Activated CD4-positive, alpha-beta T cell treated with anti-CD3 and anti-CD28 coated beads, Interleukin-2, amount 10 ng/mL, durations not matched to agents 7 days and 5 days (primary cell): ENCODE measurements at regions of chr17 and their contacts with region 1.

Region 1: DNA sequence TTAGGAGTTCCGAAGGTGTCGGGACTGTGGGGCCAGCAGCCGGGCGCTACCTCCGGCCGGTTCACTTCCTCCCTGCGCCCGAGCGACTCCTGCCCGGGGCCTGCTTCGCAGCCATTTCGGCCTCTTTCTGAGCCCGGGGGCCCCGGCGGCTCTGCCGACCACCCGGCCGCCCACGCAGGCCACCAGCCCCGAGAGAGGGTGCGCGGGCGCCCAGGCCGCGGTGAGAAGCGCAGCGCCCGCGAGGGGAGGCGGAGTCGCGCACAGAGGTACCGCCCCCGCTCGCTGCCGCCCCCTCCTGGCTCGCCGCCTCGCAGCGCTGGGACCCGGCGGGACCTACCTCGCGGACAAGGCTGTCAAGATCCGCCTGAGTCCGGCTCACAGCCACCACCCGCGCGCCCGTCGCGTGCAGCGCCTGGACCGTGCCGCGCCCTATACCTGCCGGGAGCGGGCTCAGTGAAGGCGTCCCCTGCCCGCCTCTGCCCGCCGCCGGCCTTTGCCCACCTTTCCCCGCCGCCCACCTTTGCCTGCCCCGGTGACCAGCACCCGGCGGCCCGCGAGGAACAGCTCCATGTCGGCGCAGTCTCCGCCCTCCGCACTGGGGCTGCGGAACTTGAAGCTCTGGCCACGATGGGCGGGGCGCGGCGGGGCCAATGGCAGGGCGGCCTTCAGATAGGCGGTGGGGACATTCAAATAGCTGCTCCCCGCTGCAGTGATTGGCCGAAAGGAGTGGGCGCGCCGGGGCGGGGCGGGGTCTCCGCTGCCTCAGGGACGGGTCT is at the start of gene DCXR:
- DNase-seq: peak; percentile 98
- H3K4me3 Mint-ChIP-seq: peak within 1 kb of the TSS; percentile 85
- H3K27ac Mint-ChIP-seq: peak within 1 kb of the TSS; percentile 97
- H3K4me1 Mint-ChIP-seq: peaks cover 28% of the 10 kb centered on the region
- H3K27me3 Mint-ChIP-seq: no peaks in the 10 kb centered on the region
- total RNA-seq, gene DCXR: 140 to 144 TPM

Region 2: DNA sequence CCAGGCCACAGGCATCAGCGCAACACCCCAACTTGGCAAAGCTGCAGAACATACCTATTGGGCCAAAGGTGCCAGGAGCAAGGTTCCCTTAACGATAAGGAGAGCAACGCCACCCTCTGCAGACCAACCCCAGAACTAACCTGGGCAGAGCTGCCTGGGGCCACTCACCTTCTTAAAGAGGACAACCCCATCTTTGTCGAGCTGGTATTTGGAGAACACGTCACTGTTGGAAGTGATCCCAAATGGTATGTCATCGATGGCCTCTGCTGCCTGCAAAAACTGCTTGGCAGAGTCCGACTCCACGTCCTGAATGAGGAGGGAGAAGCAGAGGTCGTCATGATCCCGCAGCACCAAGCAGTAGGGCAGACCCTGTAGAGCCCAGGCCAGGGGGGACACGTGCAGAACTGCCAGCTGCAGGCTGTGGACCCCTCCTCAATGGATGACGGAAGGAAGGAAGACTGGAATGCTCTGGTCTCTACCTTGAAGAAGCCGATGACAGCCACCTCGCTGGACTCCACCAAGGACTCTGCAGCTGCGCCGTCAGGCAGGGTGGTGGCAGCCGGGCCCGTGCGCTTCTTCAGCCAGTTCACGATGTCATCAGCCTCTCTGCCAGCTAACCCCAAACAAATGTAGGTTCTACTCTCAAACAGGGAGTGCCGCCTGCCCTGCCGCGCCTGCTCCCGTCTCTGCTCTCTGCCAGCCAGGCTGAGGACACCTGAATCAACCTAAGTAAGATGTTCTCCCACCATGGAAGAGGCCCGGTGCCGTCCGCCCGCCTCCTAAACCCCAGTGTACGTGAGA is 182.1 kb before region 1 on chr17:
- CTCF ChIA-PET with region 1: no interaction called
- POLR2A ChIA-PET with region 1: no interaction called
- DNase-seq: no peak
- H3K4me3 Mint-ChIP-seq: no peak overlapping the region
- H3K27ac Mint-ChIP-seq: no peak overlapping the region
- H3K4me1 Mint-ChIP-seq: peaks cover 25% of the 10 kb centered on the region
- H3K27me3 Mint-ChIP-seq: no peaks in the 10 kb centered on the region

Region 3: DNA sequence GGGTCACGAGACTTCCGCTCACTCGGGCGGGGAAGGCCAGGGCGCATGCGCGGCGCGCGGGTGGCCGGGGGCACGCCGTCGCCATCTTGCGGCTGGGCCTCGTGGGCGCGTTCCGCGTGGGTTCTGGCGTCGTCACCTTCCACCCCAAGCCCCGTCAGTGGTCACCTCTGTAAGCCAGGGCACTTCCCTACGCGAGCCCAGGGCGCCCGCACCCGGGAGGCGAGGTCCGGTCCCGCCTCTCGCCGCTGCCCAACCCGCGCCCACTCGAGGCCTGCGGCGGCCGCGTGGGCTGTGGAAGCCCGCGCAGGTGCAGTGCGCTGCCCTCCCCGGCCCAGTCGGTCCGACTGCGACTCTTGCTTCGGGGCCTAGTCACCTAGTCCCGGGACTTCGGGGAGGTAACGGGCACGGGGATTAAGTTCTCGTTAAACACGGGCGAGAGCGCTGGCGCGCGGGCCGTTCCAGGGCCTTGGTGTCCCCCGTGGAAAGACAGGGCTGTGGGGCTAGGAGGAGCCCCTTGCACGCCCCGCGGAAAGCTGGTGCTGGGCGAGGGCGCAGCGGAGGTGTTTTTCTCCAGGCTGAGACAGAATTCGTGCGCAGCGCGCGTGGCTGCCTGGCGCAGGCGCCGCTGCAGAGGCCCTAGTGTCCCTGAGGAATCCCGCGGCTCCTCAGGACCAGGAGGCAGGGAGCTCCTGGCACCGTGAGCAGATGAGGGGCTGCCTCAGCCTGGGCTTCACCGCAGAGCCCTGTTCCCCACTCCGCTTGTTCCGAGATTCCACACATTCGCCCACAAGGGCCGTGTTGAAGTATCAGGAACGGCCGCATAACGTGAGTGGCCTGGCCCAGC is 165.7 kb before region 1 on chr17:
- CTCF ChIA-PET with region 1: no interaction called
- POLR2A ChIA-PET with region 1: no interaction called
- DNase-seq: peak; percentile 95
- H3K4me3 Mint-ChIP-seq: peak overlapping the region; percentile 86
- H3K27ac Mint-ChIP-seq: peak overlapping the region; percentile 97
- H3K4me1 Mint-ChIP-seq: peaks cover 43% of the 10 kb centered on the region
- H3K27me3 Mint-ChIP-seq: no peaks in the 10 kb centered on the region

Region 4: DNA sequence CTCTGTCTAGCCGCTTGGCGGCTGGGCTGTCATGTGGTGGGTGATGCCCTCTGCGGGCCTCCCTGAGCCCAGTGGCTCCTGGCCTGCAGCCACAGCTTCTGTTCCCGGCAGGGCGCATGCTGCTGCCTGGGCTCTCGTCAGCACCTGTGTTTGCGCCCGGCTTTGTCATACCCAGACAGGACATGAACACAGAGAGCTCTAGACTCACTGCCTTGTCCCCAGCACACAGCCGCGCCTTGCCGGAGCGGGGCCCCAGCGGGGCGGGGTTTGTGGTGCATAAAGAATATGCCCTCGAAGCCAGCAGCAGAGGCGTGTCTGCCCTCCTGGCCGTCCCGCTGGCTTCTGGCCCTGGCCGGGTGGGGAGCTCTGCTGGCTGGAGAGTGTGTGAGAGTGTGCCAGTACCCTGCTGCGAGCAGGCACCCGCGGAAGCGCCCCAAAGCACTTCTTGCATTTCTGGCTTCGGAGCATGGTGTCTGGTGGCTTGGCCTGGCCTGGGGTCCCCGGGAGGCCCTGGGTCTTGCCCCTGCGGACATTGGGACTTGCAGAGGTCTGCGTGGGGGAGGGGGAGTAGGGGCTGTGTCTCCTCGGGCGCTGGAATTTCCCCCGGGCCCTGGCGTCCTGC is 45.5 kb before region 1 on chr17:
- CTCF ChIA-PET with region 1: no interaction called
- POLR2A ChIA-PET with region 1: no interaction called
- DNase-seq: no peak
- H3K4me3 Mint-ChIP-seq: no peak overlapping the region
- H3K27ac Mint-ChIP-seq: no peak overlapping the region
- H3K4me1 Mint-ChIP-seq: peaks cover 4% of the 10 kb centered on the region
- H3K27me3 Mint-ChIP-seq: no peaks in the 10 kb centered on the region

Region 5: GRCh38 chr17:82022981-82023374 is 14.3 kb before region 1 on chr17 and contains the start of gene LRRC45:
- CTCF ChIA-PET with region 1: interaction called, 49 read pairs
- POLR2A ChIA-PET with region 1: interaction called, 4 read pairs
- DNase-seq: peak; percentile 100
- H3K4me3 Mint-ChIP-seq: peak within 1 kb of the TSS; percentile 84
- H3K27ac Mint-ChIP-seq: peak within 1 kb of the TSS; percentile 82
- H3K4me1 Mint-ChIP-seq: peaks cover 47% of the 10 kb centered on the region
- H3K27me3 Mint-ChIP-seq: no peaks in the 10 kb centered on the region
- total RNA-seq, gene LRRC45: 54.5 to 68.4 TPM

Region 6: GRCh38 chr17:82050761-82051641 is 13.7 kb after region 1 on chr17:
- CTCF ChIA-PET with region 1: interaction called, 14 read pairs
- POLR2A ChIA-PET with region 1: interaction called, 3 read pairs
- DNase-seq: no peak
- H3K4me3 Mint-ChIP-seq: peak overlapping the region; percentile 82
- H3K27ac Mint-ChIP-seq: peak overlapping the region; percentile 93
- H3K4me1 Mint-ChIP-seq: peaks cover 23% of the 10 kb centered on the region
- H3K27me3 Mint-ChIP-seq: no peaks in the 10 kb centered on the region